ENCODE measurements at regions of chr1 and their contacts with region 1.

Region 1: GRCh38 chr1:197902454-197903195 is at the start of gene C1orf53:
- DNase-seq: peak; percentile 60 to 79 (median 77)
- H3K4me3 ChIP-seq: peak within 1 kb of the TSS; percentile 65
- H3K4me3 Mint-ChIP-seq: peak within 1 kb of the TSS; percentile 90 to 97 (median 92)
- H3K27ac ChIP-seq: peak within 1 kb of the TSS; percentile 33
- H3K27ac Mint-ChIP-seq: peak within 1 kb of the TSS; percentile 36 to 89 (median 77)
- H3K4me1 ChIP-seq: peaks cover 9% of the 10 kb centered on the region
- H3K4me1 Mint-ChIP-seq: peaks cover 6 to 18% (median 11%) of the 10 kb centered on the region in 3 donors
- H3K27me3 ChIP-seq: peaks cover 25% of the 10 kb centered on the region
- H3K27me3 Mint-ChIP-seq: peaks cover 37 to 60% of the 10 kb centered on the region in 2 donors
- total RNA-seq, gene C1orf53: 2.9 TPM

Region 2: GRCh38 chr1:197884173-197884572 is 18.5 kb before region 1 on chr1:
- CTCF ChIA-PET with region 1: no interaction called
- POLR2A ChIA-PET with region 1: no interaction called
- DNase-seq: no peak
- H3K4me3 ChIP-seq: no peak overlapping the region
- H3K4me3 Mint-ChIP-seq: no peak overlapping the region
- H3K27ac ChIP-seq: no peak overlapping the region
- H3K27ac Mint-ChIP-seq: no peak overlapping the region
- H3K4me1 ChIP-seq: no peaks in the 10 kb centered on the region
- H3K4me1 Mint-ChIP-seq: no peaks in the 10 kb centered on the region
- H3K27me3 ChIP-seq: no peaks in the 10 kb centered on the region
- H3K27me3 Mint-ChIP-seq: peaks cover 27 to 45% of the 10 kb centered on the region in 2 donors

Region 3: DNA sequence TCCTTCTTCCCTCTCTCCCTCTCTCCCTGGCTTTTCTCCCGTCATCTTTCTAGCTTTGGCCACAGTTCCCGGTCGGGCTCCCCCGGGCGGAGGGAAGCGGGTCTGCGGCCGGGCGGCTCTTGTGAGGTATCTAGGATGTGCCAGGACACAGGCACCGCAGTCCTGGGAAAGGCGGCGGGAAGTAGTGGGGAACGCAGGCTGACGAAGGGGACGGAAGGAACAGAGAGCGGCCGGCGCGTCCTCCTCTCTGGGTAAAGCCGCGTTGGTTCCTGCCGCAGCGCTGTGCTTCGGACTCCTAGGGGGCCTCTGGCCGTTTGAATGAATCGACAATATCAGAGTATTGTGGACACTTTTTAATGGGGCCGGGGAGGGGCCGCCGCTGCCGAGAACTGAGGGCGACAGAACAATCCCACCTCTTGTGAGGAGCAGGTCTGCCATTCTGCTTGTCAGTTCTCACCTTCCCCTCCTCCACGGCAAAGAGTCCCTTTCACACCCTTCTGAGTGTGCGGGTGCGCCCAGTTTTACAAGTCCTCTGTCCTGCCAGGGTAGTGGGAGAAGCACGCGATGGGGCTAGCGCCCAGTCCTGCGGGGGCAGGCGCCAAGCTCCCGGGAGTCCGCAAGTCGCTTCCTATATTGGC is 13.4 kb after region 1 on chr1:
- CTCF ChIA-PET with region 1: interaction called, 13 read pairs
- POLR2A ChIA-PET with region 1: interaction called, 7 read pairs
- DNase-seq: no peak
- H3K4me3 ChIP-seq: peak overlapping the region; percentile 14
- H3K4me3 Mint-ChIP-seq: peak overlapping the region in 6 of 7 donors; percentile 15 to 82 (median 70)
- H3K27ac ChIP-seq: no peak overlapping the region
- H3K27ac Mint-ChIP-seq: peak overlapping the region in 2 of 8 donors; percentile 31 to 71
- H3K4me1 ChIP-seq: peaks cover 81% of the 10 kb centered on the region
- H3K4me1 Mint-ChIP-seq: peaks cover 69 to 93% (median 82%) of the 10 kb centered on the region in 3 donors
- H3K27me3 ChIP-seq: peaks cover 97% of the 10 kb centered on the region
- H3K27me3 Mint-ChIP-seq: peaks cover 91 to 100% of the 10 kb centered on the region in 2 donors

Region 4: GRCh38 chr1:197924516-197925123 is 22.0 kb after region 1 on chr1:
- CTCF ChIA-PET with region 1: interaction called, 13 read pairs
- POLR2A ChIA-PET with region 1: interaction called, 7 read pairs
- DNase-seq: no peak
- H3K4me3 ChIP-seq: no peak overlapping the region
- H3K4me3 Mint-ChIP-seq: no peak overlapping the region
- H3K27ac ChIP-seq: no peak overlapping the region
- H3K27ac Mint-ChIP-seq: no peak overlapping the region
- H3K4me1 ChIP-seq: peaks cover 4% of the 10 kb centered on the region
- H3K4me1 Mint-ChIP-seq: peaks cover 19 to 24% (median 23%) of the 10 kb centered on the region in 3 donors
- H3K27me3 ChIP-seq: peaks cover 45% of the 10 kb centered on the region
- H3K27me3 Mint-ChIP-seq: peaks cover 54 to 88% of the 10 kb centered on the region in 2 donors

Region 5: DNA sequence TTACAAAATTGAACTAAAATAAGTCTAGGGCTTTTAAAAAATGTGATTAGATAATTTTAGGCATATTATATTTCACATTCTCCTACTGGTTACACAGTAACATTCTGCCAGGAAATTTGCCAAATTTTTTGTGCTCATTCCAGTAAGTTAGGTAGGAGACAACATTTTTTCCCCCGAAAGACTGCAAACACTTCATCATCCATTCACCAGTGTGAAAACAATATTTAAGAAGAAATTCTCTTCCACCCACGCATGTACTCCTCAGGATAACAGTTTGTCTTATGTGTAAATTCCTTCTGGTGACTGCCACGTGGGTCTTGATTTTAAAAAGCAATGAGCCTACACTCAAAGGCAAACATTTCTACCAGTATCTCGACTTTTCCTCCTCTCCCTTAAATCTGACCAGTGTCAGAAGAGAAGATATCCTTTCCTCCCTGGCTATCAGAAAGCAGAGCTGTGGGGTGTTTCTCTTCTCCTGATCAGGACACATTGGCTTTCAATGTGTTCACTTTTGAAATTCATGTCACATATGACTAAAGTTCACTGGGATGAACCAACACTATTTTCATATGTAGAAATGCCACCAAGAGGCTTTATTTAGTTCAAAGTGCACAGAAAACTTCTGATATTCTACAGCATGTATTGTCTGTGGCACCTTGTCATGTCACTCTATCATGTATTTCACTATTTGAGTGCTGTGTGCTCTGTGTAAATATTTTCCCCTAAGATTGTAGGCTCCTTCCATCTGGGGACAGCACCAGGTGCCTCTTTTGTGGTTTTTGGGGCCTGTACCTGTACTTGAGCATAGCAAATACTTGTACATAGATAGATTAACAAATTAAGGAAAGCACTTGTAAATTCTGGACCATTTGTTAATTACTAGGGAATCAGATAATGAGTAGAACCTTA is 53.1 kb after region 1 on chr1:
- CTCF ChIA-PET with region 1: no interaction called
- POLR2A ChIA-PET with region 1: no interaction called
- DNase-seq: no peak
- H3K4me3 ChIP-seq: no peak overlapping the region
- H3K4me3 Mint-ChIP-seq: no peak overlapping the region
- H3K27ac ChIP-seq: no peak overlapping the region
- H3K27ac Mint-ChIP-seq: no peak overlapping the region
- H3K4me1 ChIP-seq: no peaks in the 10 kb centered on the region
- H3K4me1 Mint-ChIP-seq: peaks cover 3% of the 10 kb centered on the region in 3 donors
- H3K27me3 ChIP-seq: no peaks in the 10 kb centered on the region
- H3K27me3 Mint-ChIP-seq: peaks cover 3 to 12% of the 10 kb centered on the region in 2 donors